H1 (cell line): ENCODE measurements at regions of chr2 and their contacts with region 1.

Region 1: GRCh38 chr2:35410431-35411061 is 945.0 kb upstream of the CRIM1 start:
- DNase-seq: peak; percentile 7 to 73
- H3K4me3 ChIP-seq: no peak overlapping the region
- H3K27ac ChIP-seq: no peak overlapping the region
- H3K4me1 ChIP-seq: no peaks in the 10 kb centered on the region
- H3K27me3 ChIP-seq: no peaks in the 10 kb centered on the region
- CTCF ChIP-seq: peak; percentile 74 to 83 (median 76)
- EP300 ChIP-seq: no peak
- POLR2A ChIP-seq: no peak
- RAD21 ChIP-seq: peak; percentile 79 to 82

Region 2: GRCh38 chr2:35421485-35421884 is 10.9 kb after region 1 on chr2:
- CTCF ChIA-PET with region 1: interaction called, 14 read pairs
- POLR2A ChIA-PET with region 1: no interaction called
- DNase-seq: no peak
- H3K4me3 ChIP-seq: no peak overlapping the region
- H3K27ac ChIP-seq: no peak overlapping the region
- H3K4me1 ChIP-seq: no peaks in the 10 kb centered on the region
- H3K27me3 ChIP-seq: no peaks in the 10 kb centered on the region
- CTCF ChIP-seq: no peak
- EP300 ChIP-seq: no peak
- POLR2A ChIP-seq: no peak
- RAD21 ChIP-seq: no peak

Region 3: GRCh38 chr2:35428548-35428947 is 18.0 kb after region 1 on chr2:
- CTCF ChIA-PET with region 1: interaction called, 14 read pairs
- POLR2A ChIA-PET with region 1: no interaction called
- DNase-seq: peak; percentile 25 to 77
- H3K4me3 ChIP-seq: no peak overlapping the region
- H3K27ac ChIP-seq: no peak overlapping the region
- H3K4me1 ChIP-seq: no peaks in the 10 kb centered on the region
- H3K27me3 ChIP-seq: no peaks in the 10 kb centered on the region
- CTCF ChIP-seq: peak; percentile 60 to 63 (median 62)
- EP300 ChIP-seq: no peak
- POLR2A ChIP-seq: no peak
- RAD21 ChIP-seq: peak; percentile 52 to 71

Region 4: DNA sequence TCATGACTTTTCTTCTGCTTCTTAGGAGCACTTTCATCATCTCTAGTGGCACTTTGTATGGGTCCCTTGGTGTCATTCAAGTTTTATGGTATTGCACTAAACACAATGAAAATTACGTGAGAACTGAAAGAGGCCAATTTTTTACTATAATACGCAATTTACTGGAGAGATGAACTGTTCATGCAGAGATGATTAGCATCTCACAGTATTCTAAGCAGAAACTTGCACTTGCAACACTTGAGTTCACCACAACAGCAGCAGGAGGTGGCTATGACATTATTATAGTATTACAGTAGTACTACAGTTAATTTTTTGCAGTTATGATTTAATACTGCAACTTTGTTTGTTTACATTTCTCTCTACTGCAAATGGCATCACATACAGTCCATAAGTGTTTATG is 151.9 kb after region 1 on chr2:
- CTCF ChIA-PET with region 1: no interaction called
- POLR2A ChIA-PET with region 1: no interaction called
- DNase-seq: no peak
- H3K4me3 ChIP-seq: no peak overlapping the region
- H3K27ac ChIP-seq: no peak overlapping the region
- H3K4me1 ChIP-seq: no peaks in the 10 kb centered on the region
- H3K27me3 ChIP-seq: no peaks in the 10 kb centered on the region
- CTCF ChIP-seq: no peak
- EP300 ChIP-seq: no peak
- POLR2A ChIP-seq: no peak
- RAD21 ChIP-seq: no peak

Region 5: GRCh38 chr2:35714883-35715282 is 304.3 kb after region 1 on chr2:
- CTCF ChIA-PET with region 1: no interaction called
- POLR2A ChIA-PET with region 1: no interaction called
- DNase-seq: no peak
- H3K4me3 ChIP-seq: no peak overlapping the region
- H3K27ac ChIP-seq: no peak overlapping the region
- H3K4me1 ChIP-seq: no peaks in the 10 kb centered on the region
- H3K27me3 ChIP-seq: no peaks in the 10 kb centered on the region
- CTCF ChIP-seq: no peak
- EP300 ChIP-seq: no peak
- POLR2A ChIP-seq: no peak
- RAD21 ChIP-seq: no peak